Activated CD4-positive, alpha-beta T cell treated with anti-CD3 and anti-CD28 coated beads for 36 hours (primary cell): ENCODE measurements at regions of chr1 and their contacts with region 1.

Region 1: GRCh38 chr1:235504496-235505222 is 407 bp upstream of the B3GALNT2 start:
- DNase-seq: peak; percentile 99
- ATAC-seq: peak; percentile 89
- H3K4me3 Mint-ChIP-seq: peak overlapping the region; percentile 93
- H3K27ac Mint-ChIP-seq: peak overlapping the region; percentile 98
- H3K4me1 Mint-ChIP-seq: peaks cover 30% of the 10 kb centered on the region
- H3K27me3 Mint-ChIP-seq: no peaks in the 10 kb centered on the region

Region 2: DNA sequence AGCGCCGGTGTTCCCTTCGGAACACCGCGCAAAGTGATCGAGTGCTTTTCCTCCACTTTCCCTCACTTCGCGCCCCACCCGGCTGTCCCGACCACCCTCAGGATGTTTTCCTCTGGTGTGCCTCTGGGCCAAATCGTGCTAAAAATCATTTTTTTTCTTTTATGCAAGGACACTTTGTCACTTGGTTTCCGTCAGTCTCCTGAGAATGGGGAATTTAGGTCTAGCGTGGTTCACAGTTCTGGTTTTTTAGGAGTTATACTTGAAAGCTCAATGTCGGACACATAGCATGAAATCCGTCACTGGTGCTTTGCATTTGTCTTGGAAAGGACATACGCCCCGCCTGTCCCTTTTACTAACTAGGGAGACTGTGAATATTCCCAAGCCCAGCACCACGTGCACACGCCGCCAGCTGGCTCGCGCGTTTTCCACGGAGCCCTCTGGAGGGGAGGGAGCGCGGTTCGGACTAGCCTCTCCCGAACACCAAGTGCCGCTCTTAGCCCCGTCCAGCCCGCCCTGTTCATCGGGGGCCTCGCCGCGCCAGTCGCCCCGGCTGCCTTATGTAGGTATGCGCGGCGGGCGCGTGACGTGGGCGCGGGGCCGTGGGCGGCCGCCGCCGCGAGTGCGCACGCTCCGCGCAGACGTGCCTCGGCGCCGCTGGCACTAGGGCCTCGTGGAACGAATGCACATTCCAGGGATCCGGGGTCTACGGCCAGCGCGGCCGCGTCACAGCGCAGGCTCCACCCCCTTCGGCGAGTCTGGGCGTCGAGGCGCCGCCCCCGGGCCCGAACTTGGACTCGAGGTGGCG is 894.1 kb before region 1 on chr1:
- CTCF ChIA-PET with region 1: no interaction called
- POLR2A ChIA-PET with region 1: no interaction called
- intact Hi-C with region 1: loop called in 1 of 2 experiments (anchors 2 kb)
- DNase-seq: peak; percentile 95
- ATAC-seq: peak; percentile 52
- H3K4me3 Mint-ChIP-seq: peak overlapping the region; percentile 79
- H3K27ac Mint-ChIP-seq: peak overlapping the region; percentile 90
- H3K4me1 Mint-ChIP-seq: peaks cover 29% of the 10 kb centered on the region
- H3K27me3 Mint-ChIP-seq: no peaks in the 10 kb centered on the region

Region 3: DNA sequence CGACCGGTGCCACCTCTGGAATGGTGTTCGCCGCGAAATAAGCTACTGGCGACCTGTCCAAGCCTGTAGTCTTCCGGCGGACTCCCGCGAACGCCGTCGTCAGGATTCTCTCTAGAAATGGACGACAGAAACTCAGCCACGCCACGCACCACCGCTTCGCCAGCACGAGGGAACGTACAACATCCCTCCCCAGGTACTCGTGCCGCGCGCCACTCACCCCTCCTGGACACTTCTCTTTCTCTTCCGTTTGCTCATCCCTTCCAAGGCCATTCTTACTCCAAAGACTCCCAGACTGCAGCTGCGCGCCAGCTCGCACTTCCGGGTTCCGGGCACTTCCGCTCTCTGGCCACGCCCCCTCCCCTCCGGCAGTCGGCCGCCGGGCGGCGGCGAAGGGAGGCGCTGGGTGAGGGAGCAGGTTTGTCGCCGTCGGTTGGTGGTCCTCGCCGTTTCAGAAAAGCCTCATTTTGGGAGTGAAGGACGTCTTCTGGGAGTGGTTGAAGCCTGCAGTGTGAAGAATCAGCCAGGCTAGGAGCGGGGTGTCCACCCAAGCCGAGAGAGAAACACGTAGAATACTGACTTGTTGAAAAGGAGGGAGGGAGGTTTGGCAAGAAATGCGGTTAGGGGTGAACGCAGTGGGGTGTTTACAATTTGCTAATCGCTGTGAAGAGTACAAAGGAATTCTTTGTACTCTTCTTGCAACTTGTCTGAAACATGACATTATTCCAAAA is 343.5 kb before region 1 on chr1 and contains the start of gene RBM34:
- CTCF ChIA-PET with region 1: no interaction called
- POLR2A ChIA-PET with region 1: interaction called, 4 read pairs
- intact Hi-C with region 1: loop called in 1 of 2 experiments (anchors 1 kb)
- DNase-seq: peak; percentile 97
- ATAC-seq: peak; percentile 91
- H3K4me3 Mint-ChIP-seq: peak within 1 kb of the TSS; percentile 93
- H3K27ac Mint-ChIP-seq: peak within 1 kb of the TSS; percentile 95
- H3K4me1 Mint-ChIP-seq: peaks cover 15% of the 10 kb centered on the region
- H3K27me3 Mint-ChIP-seq: no peaks in the 10 kb centered on the region
- total RNA-seq, gene RBM34: 126 to 154 TPM

Region 4: GRCh38 chr1:235642011-235642942 is 137.6 kb after region 1 on chr1:
- CTCF ChIA-PET with region 1: interaction called, 3 read pairs
- POLR2A ChIA-PET with region 1: interaction called, 3 read pairs
- intact Hi-C with region 1: loop called in 1 of 2 experiments (anchors 2 kb)
- DNase-seq: peak; percentile 84
- ATAC-seq: peak; percentile 89
- H3K4me3 Mint-ChIP-seq: peak overlapping the region; percentile 47
- H3K27ac Mint-ChIP-seq: peak overlapping the region; percentile 77
- H3K4me1 Mint-ChIP-seq: peaks cover 23% of the 10 kb centered on the region
- H3K27me3 Mint-ChIP-seq: peaks cover 25% of the 10 kb centered on the region

Region 5: GRCh38 chr1:235866913-235867845 is 362.5 kb after region 1 on chr1:
- CTCF ChIA-PET with region 1: interaction called, 3 read pairs
- POLR2A ChIA-PET with region 1: interaction called, 7 read pairs
- intact Hi-C with region 1: loop called (anchors 1 to 2 kb)
- DNase-seq: peak; percentile 99
- ATAC-seq: peak; percentile 76
- H3K4me3 Mint-ChIP-seq: peak overlapping the region; percentile 96
- H3K27ac Mint-ChIP-seq: peak overlapping the region; percentile 97
- H3K4me1 Mint-ChIP-seq: peaks cover 45% of the 10 kb centered on the region
- H3K27me3 Mint-ChIP-seq: no peaks in the 10 kb centered on the region

Region 6: DNA sequence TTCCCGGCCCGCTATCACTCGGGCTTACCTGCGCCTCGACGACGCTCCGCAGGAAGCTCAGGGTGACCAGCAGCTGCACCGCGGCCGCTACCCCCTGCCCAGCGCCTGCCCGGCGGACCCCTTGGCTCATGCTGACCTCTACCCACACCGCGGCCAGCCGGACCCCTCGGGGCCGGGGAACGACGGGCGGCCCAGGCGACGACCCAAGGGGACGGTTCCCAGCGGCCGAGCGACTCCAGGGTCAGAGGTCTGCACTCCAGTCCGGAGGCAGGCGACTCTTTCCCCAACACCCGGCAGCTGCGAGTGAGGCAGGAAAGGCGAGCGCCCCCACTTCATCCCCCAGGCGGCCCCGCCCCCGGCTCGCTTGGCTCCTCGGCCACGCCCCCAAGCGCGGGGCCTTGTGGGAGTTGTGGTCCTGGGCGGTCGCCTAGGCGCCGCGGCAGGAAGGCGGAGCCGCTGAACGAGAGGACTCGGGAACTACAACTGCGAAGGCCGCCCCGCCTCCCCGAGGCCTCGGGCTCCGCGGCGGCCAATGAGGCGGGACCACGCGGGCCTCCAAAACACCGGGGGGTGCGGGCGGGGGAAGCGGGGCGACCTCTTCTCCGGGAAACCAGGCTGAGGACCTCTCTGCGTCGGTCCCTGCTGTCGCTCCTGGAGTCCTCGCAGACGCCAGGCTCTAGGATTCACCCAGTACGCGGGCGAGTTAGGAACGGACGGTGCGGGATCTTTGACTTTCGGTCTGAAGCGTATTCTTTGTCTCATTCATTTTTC is 777.2 kb after region 1 on chr1 and contains the start of gene ERO1B:
- CTCF ChIA-PET with region 1: no interaction called
- POLR2A ChIA-PET with region 1: no interaction called
- intact Hi-C with region 1: loop called in 1 of 2 experiments (anchors 5 kb)
- DNase-seq: peak; percentile 98
- ATAC-seq: peak; percentile 86
- H3K4me3 Mint-ChIP-seq: peak within 1 kb of the TSS; percentile 82
- H3K27ac Mint-ChIP-seq: peak within 1 kb of the TSS; percentile 70
- H3K4me1 Mint-ChIP-seq: peaks cover 47% of the 10 kb centered on the region
- H3K27me3 Mint-ChIP-seq: peaks cover 1% of the 10 kb centered on the region
- total RNA-seq, gene ERO1B: 2.2 to 2.8 TPM